Calu3 (cell line): ENCODE measurements at regions of chr3 and their contacts with region 1.

Region 1: GRCh38 chr3:118884748-118885206 is 149.9 kb downstream of the IGSF11 start:
- DNase-seq: peak; percentile 87
- H3K4me3 Mint-ChIP-seq: no peak overlapping the region
- H3K27ac Mint-ChIP-seq: no peak overlapping the region
- H3K4me1 Mint-ChIP-seq: no peaks in the 10 kb centered on the region
- H3K27me3 Mint-ChIP-seq: peaks cover 32% of the 10 kb centered on the region
- CTCF ChIP-seq: peak; percentile 78

Region 2: GRCh38 chr3:117645561-117646242 is 1239.1 kb before region 1 on chr3:
- CTCF ChIA-PET with region 1: no interaction called
- intact Hi-C with region 1: no loop called
- DNase-seq: no peak
- H3K4me3 Mint-ChIP-seq: no peak overlapping the region
- H3K27ac Mint-ChIP-seq: no peak overlapping the region
- H3K4me1 Mint-ChIP-seq: no peaks in the 10 kb centered on the region
- H3K27me3 Mint-ChIP-seq: no peaks in the 10 kb centered on the region
- CTCF ChIP-seq: no peak

Region 3: DNA sequence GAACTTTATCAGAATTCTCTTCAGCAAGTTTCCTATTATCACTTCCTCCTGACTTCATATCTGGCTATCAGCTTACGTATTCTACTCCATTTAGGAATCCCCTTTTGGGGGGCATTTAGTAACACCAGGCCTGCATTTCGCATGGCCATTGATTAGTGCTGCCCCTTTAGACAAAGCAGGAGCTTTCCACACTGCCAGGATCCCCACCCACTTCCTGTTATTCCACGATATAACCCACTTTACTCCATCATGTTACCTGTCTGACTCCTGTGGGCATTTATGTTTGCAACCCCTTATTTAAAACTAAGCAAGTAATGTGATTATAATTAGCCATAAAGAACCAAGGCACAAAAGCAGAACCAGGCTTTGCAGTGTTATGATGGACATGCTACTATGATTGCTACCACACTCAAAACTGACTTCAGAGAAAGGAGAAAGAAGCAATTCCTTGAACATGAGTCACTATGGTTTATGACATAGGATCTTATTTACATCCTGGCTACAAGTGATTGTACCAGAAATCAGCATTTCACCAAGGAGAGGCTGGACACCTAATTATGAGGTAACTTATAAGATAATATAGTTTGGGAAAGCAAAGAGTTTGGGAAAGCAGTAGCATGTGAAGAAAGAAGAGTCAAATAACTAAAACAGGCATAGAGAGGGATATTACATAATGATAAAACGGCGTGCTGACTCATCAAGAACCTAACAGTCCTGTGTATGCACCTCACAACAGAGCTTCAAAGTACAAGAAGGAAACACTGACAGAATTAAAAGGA is 53.6 kb after region 1 on chr3:
- CTCF ChIA-PET with region 1: no interaction called
- intact Hi-C with region 1: loop called (anchors 5 kb)
- DNase-seq: no peak
- H3K4me3 Mint-ChIP-seq: no peak overlapping the region
- H3K27ac Mint-ChIP-seq: no peak overlapping the region
- H3K4me1 Mint-ChIP-seq: peaks cover 13% of the 10 kb centered on the region
- H3K27me3 Mint-ChIP-seq: no peaks in the 10 kb centered on the region
- CTCF ChIP-seq: no peak

Region 4: GRCh38 chr3:118991775-118992174 is 107.0 kb after region 1 on chr3:
- CTCF ChIA-PET with region 1: interaction called, 10 read pairs
- intact Hi-C with region 1: no loop called
- DNase-seq: no peak
- H3K4me3 Mint-ChIP-seq: no peak overlapping the region
- H3K27ac Mint-ChIP-seq: no peak overlapping the region
- H3K4me1 Mint-ChIP-seq: no peaks in the 10 kb centered on the region
- H3K27me3 Mint-ChIP-seq: no peaks in the 10 kb centered on the region
- CTCF ChIP-seq: no peak

Region 5: GRCh38 chr3:119034256-119035013 is 149.7 kb after region 1 on chr3 and contains the start of gene IGSF11:
- CTCF ChIA-PET with region 1: interaction called, 76 read pairs
- intact Hi-C with region 1: loop called (anchors 1 kb)
- DNase-seq: peak; percentile 79
- H3K4me3 Mint-ChIP-seq: peak within 1 kb of the TSS; percentile 79
- H3K27ac Mint-ChIP-seq: no peak within 1 kb of the TSS
- H3K4me1 Mint-ChIP-seq: peaks cover 8% of the 10 kb centered on the region
- H3K27me3 Mint-ChIP-seq: peaks cover 13% of the 10 kb centered on the region
- CTCF ChIP-seq: no peak
- total RNA-seq, gene IGSF11: 0.45 and 0.56 TPM in 2 replicates

Region 6: DNA sequence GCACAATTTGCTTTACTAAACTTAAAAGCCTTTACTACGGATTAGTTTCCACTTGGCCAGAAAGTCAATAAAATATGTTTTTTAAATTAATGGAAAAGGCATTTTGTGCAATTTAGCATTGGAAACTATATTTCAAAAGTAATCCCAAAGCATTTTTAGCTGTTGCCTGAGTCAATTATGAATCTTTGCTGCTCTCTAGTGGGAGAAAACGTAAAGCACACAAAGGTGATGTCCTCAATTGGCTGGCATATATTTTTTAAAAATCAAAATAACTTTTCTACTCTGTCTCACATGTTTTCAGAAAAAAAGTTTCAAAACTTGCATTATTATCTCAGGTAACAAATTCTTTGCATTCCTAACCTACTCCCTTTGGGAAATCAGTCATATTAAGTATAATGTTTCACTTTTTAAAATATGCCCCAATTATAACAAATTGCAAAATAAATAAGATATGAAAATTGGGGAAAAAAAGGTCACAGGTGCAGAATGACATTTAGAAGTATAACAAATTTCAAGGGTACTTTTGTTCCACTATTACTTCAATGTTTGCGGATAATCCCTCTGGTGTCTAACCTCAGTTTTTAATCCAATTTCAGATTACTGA is 213.9 kb after region 1 on chr3:
- CTCF ChIA-PET with region 1: interaction called, 38 read pairs
- intact Hi-C with region 1: loop called (anchors 1 kb)
- DNase-seq: peak; percentile 34
- H3K4me3 Mint-ChIP-seq: no peak overlapping the region
- H3K27ac Mint-ChIP-seq: no peak overlapping the region
- H3K4me1 Mint-ChIP-seq: no peaks in the 10 kb centered on the region
- H3K27me3 Mint-ChIP-seq: no peaks in the 10 kb centered on the region
- CTCF ChIP-seq: peak; percentile 54

Region 7: DNA sequence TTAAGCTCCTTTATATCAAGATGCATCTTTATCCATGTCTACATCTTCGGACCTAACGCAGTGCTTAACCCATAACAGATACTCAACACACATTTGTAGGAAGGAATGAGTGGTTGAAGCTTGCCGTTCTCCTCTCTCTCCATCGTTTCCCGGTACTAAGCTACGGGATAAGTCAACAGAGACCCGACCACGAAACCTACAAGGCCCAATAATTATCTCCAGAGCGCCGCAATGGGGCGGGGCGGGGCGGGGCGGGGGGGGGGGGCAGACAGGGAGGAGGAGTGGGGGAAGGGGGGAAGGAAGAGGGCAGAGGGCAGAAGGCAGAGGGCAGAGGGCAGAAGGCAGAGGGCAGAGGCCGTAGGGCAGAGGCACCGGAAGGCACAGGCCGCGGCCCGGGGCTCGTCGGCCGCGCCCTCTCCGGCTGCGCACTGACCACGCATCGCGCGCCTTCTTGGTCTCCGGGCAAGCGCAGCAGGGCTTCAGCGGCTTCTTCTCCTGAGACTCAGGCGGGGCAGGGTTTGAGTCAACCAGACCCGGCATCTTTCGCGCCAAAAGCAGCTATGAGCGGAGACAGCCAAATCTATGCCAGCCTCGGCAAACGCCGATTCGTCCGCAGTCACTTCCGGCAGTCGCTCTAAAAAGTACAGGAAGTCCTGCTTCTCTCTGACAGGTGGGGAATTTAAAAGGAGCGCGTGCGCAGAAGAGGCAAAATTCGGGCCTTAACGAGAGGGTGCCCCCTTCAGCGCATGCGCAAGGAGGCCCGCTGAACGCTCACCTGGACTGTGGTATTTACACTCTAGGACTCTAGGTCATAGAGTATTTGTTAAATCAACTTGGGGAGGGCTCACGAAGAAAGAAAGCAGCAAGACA is 792.2 kb after region 1 on chr3 and contains the start of gene COX17:
- CTCF ChIA-PET with region 1: no interaction called
- intact Hi-C with region 1: loop called (anchors 1 kb)
- DNase-seq: peak; percentile 93
- H3K4me3 Mint-ChIP-seq: peak within 1 kb of the TSS; percentile 76
- H3K27ac Mint-ChIP-seq: peak within 1 kb of the TSS; percentile 94
- H3K4me1 Mint-ChIP-seq: no peaks in the 10 kb centered on the region
- H3K27me3 Mint-ChIP-seq: no peaks in the 10 kb centered on the region
- CTCF ChIP-seq: no peak
- total RNA-seq, gene COX17: 48.4 and 51.3 TPM in 2 replicates